ENCODE measurements at regions of chr6 and their contacts with region 1.

Region 1: GRCh38 chr6:11496152-11497060 is 41.1 kb upstream of the TMEM170B start:
- DNase-seq: peak; percentile 74
- ATAC-seq: peak; percentile 96
- H3K4me3 ChIP-seq: no peak overlapping the region
- H3K27ac ChIP-seq: no peak overlapping the region
- H3K4me1 ChIP-seq: no peaks in the 10 kb centered on the region
- H3K27me3 ChIP-seq: no peaks in the 10 kb centered on the region
- CTCF ChIP-seq: peak; percentile 76 to 99 (median 85)
- POLR2A ChIP-seq: no peak
- RAD21 ChIP-seq: peak; percentile 98

Region 2: DNA sequence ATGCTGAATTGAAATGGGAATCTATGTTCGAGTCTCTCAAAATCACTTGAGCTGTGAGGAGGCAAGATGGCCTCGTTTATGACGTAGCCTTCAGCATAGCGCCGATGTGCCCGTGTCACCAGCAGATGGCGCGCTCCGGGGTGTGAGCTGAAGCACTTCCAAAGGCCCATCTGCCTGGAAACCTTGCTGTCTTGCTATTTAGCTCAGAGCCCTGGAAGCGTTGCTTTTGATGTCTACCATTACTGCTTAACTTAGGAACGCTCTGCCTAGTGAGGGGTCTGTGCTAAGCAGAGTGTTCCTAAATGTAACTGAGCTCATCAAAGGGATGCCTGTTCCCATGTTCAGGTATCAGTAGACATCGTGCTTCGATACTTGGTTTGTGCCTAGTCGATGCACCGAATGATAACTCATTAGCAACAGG is 541.8 kb before region 1 on chr6:
- CTCF ChIA-PET with region 1: interaction called, 13 read pairs
- POLR2A ChIA-PET with region 1: no interaction called
- RAD21 ChIA-PET with region 1: no interaction called
- intact Hi-C with region 1: loop called (anchors 1 kb)
- DNase-seq: peak; percentile 54
- ATAC-seq: peak; percentile 95
- H3K4me3 ChIP-seq: no peak overlapping the region
- H3K27ac ChIP-seq: no peak overlapping the region
- H3K4me1 ChIP-seq: no peaks in the 10 kb centered on the region
- H3K27me3 ChIP-seq: no peaks in the 10 kb centered on the region
- CTCF ChIP-seq: peak; percentile 68 to 94 (median 92)
- POLR2A ChIP-seq: no peak
- RAD21 ChIP-seq: peak; percentile 65

Region 3: GRCh38 chr6:11144393-11144851 is 352.0 kb before region 1 on chr6:
- CTCF ChIA-PET with region 1: interaction called, 21 read pairs
- POLR2A ChIA-PET with region 1: no interaction called
- RAD21 ChIA-PET with region 1: no interaction called
- intact Hi-C with region 1: loop called (anchors 1 kb)
- DNase-seq: peak; percentile 61
- ATAC-seq: peak; percentile 94
- H3K4me3 ChIP-seq: no peak overlapping the region
- H3K27ac ChIP-seq: no peak overlapping the region
- H3K4me1 ChIP-seq: peaks cover 7 to 22% of the 10 kb centered on the region in 2 experiments; a peak in 3 of 4 replicates
- H3K27me3 ChIP-seq: no peaks in the 10 kb centered on the region
- CTCF ChIP-seq: peak; percentile 88 to 96 (median 94)
- POLR2A ChIP-seq: no peak
- RAD21 ChIP-seq: peak; percentile 93

Region 4: DNA sequence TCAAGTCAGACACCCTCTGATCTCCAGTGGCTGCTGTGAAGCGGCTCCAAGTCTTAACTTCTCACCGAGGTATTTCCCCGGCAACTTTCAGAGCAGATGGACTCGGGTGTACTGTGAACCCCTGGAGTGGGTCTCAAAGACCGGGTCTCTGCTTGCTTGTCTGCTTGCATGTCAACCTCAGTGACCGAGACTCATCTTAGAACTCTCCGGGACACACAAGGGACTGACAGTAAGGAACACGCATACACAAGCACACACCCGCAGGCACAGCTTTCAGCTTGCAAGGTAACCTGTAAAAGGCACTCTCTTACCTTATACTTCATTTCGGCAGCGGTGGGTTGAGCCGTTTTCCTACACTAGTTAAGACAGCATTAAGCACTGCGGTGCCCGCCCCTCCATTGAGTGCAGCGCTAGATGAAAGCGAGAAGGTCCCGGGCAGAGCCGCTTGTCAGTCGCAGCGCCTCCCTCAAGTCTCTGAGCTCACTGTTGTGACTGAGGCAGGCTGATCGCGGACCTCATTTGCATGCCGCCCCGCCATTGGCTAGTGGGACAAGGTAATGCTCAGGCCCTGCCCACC is 264.1 kb before region 1 on chr6 and contains the start of gene NEDD9:
- CTCF ChIA-PET with region 1: no interaction called
- POLR2A ChIA-PET with region 1: no interaction called
- RAD21 ChIA-PET with region 1: no interaction called
- intact Hi-C with region 1: loop called (anchors 5 kb)
- DNase-seq: peak; percentile 80
- ATAC-seq: peak; percentile 100
- H3K4me3 ChIP-seq: peak within 1 kb of the TSS; percentile 46 to 58
- H3K27ac ChIP-seq: no peak within 1 kb of the TSS
- H3K4me1 ChIP-seq: peaks cover 0 to 7% of the 10 kb centered on the region in 2 experiments; a peak in 3 of 4 replicates
- H3K27me3 ChIP-seq: 0 out of 2 replicates have a peak, but pooled peaks cover 9% of the 10 kb centered on the region
- CTCF ChIP-seq: no peak
- POLR2A ChIP-seq: no peak
- RAD21 ChIP-seq: no peak
- total RNA-seq, gene NEDD9: 0.17 TPM

Region 5: DNA sequence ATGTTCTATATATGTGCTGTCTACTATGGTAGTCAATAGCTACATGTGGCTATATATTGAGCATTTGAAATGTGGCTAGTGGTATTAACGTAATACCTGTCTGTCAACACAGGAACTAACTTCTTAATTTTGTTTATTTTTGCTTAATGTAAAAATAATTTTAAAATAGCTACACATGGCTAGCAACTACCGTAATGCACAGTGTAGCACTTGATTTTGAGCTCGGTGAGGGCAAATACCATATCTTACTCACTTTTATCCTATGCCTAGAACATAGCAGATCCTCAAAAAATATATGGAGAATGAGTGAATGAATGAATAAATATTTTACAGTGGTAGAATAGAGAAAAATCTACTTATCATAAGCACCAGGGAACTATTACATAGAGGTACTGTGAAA is 13.1 kb after region 1 on chr6:
- CTCF ChIA-PET with region 1: no interaction called
- POLR2A ChIA-PET with region 1: no interaction called
- RAD21 ChIA-PET with region 1: no interaction called
- intact Hi-C with region 1: no loop called
- DNase-seq: no peak
- ATAC-seq: no peak
- H3K4me3 ChIP-seq: no peak overlapping the region
- H3K27ac ChIP-seq: no peak overlapping the region
- H3K4me1 ChIP-seq: no peaks in the 10 kb centered on the region
- H3K27me3 ChIP-seq: no peaks in the 10 kb centered on the region
- CTCF ChIP-seq: no peak
- POLR2A ChIP-seq: no peak
- RAD21 ChIP-seq: no peak

Region 6: GRCh38 chr6:11575408-11576033 is 79.1 kb after region 1 on chr6:
- CTCF ChIA-PET with region 1: interaction called, 11 read pairs
- POLR2A ChIA-PET with region 1: no interaction called
- RAD21 ChIA-PET with region 1: no interaction called
- intact Hi-C with region 1: loop called (anchors 5 kb)
- DNase-seq: peak; percentile 71
- ATAC-seq: peak; percentile 100
- H3K4me3 ChIP-seq: no peak overlapping the region
- H3K27ac ChIP-seq: no peak overlapping the region
- H3K4me1 ChIP-seq: no peaks in the 10 kb centered on the region
- H3K27me3 ChIP-seq: no peaks in the 10 kb centered on the region
- CTCF ChIP-seq: peak; percentile 67 to 92 (median 89); a peak in 5 of 6 replicates
- POLR2A ChIP-seq: no peak
- RAD21 ChIP-seq: peak; percentile 89

Measured in HCT116 (cell line).